ENCODE measurements at regions of chr22 and their contacts with region 1.

Region 1: DNA sequence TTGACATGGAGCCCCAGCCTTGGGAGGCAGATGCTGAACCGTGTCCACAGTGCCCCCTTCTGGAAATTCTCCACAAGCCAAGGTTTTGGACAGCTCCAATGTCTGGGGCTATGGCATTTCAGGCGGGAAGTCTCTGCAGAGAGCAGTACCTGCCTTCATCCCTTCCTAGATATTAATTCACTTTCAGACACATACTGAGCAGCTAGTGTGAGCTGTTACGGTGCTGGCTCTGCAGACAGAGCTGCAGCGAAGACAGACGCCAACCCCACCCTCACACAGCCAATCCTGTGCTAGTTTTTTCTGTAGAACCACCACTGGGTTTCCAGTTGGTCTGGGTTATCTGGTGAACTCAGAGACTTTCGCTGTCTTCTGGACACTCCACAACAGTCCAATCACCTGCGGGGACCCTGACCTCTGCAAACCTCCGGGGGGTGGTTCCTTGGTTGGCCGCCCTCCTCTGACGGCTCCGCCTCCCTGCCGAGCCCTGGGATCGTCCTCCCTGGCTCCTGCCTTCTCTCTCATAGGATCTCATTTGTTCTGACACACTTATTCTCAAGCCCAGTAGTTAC is 9.1 kb downstream of the LMF2 start:
- DNase-seq: peak; percentile 80
- H3K4me3 ChIP-seq: peak overlapping the region; percentile 31
- H3K27ac ChIP-seq: peak overlapping the region; percentile 17
- H3K4me1 ChIP-seq: peaks cover 5% of the 10 kb centered on the region
- H3K27me3 ChIP-seq: no peaks in the 10 kb centered on the region
- CTCF ChIP-seq: peak; percentile 83

Region 2: DNA sequence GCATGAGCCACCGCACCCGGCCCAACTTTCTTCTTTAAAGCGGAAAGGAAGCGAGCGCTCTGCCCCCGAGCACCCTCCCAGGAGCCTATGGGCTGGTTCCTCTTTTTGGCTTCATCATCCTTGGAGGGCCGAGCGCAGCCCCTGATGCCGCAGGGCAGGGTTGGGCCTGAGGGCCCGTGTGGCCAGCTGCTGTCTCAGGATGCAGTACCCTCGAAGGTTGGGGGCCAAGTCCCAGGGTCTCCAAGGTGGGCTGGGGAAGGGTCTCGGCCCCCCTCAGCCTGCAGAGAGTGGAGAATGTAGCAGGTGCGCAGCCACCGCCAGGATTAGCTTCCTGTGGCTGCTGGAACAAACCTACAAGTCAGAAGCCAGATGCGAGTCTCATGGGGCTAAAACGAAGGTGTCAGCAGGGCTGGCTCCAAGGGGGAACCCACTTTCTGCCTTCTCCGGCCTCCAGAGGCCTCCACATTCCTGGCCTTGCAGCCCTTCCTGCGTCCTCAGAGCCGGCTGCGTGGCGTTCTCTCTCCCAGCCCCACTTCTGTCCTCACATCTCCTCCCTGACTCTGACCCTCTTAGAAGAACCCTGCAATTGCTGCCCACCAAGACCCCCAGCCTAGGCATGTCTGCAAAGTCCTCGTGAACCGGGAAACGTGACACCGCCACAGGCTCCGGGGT is 325.0 kb before region 1 on chr22:
- CTCF ChIA-PET with region 1: no interaction called
- POLR2A ChIA-PET with region 1: no interaction called
- intact Hi-C with region 1: no loop called
- DNase-seq: no peak
- H3K4me3 ChIP-seq: no peak overlapping the region
- H3K27ac ChIP-seq: no peak overlapping the region
- H3K4me1 ChIP-seq: peaks cover 4% of the 10 kb centered on the region
- H3K27me3 ChIP-seq: no peaks in the 10 kb centered on the region
- CTCF ChIP-seq: no peak

Region 3: DNA sequence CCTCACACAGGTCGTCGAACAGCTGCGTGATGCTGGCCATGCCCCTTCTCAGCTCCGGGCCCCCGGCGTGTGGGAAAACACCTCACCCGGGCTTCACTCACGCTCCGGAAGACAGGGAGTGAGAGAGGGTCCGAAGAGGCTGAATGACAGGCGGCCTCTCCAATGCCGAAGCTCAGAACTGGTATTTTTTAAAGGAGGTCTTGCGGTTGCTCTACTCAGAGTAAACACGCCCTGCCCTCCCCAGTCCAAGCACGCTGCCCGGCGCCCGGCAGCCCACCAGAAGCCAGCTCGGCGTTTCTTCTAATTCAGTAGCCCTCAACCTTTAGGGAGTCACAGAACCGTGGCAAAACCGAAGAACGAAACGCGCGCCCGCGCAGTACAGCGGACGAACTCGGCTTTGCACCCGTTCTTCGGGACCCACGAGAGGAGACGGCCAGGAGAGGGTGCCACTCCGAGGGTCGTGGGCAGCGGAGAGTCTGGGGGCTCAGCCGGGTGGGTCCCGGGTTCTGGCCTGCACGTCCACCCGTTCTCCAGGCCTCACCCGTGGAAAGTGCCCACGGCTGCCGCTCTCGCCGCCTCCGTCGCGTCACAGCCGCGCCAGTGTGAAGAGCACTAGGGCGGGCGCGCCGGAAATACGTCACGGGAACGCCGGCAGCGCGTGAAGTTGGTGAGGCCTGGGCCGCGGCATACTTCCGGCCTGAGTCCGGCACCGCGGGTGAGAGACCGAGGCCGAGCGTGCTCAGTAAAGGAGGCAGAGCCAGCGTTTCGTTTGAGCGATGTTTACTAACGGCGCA is 253.8 kb before region 1 on chr22 and contains the start of gene TUBGCP6:
- CTCF ChIA-PET with region 1: interaction called, 3 read pairs
- POLR2A ChIA-PET with region 1: no interaction called
- intact Hi-C with region 1: loop called (anchors 2 kb)
- DNase-seq: peak; percentile 96
- H3K4me3 ChIP-seq: peak within 1 kb of the TSS; percentile 98
- H3K27ac ChIP-seq: peak within 1 kb of the TSS; percentile 93
- H3K4me1 ChIP-seq: no peaks in the 10 kb centered on the region
- H3K27me3 ChIP-seq: no peaks in the 10 kb centered on the region
- CTCF ChIP-seq: 0 out of 2 replicates have a peak, but pooled peaks have one; percentile 16
- total RNA-seq, gene TUBGCP6: 31.0 and 33.1 TPM in 2 replicates

Measured in A673 (cell line).